GM12878 (cell line): ENCODE measurements at regions of chr9 and their contacts with region 1.

Region 1: DNA sequence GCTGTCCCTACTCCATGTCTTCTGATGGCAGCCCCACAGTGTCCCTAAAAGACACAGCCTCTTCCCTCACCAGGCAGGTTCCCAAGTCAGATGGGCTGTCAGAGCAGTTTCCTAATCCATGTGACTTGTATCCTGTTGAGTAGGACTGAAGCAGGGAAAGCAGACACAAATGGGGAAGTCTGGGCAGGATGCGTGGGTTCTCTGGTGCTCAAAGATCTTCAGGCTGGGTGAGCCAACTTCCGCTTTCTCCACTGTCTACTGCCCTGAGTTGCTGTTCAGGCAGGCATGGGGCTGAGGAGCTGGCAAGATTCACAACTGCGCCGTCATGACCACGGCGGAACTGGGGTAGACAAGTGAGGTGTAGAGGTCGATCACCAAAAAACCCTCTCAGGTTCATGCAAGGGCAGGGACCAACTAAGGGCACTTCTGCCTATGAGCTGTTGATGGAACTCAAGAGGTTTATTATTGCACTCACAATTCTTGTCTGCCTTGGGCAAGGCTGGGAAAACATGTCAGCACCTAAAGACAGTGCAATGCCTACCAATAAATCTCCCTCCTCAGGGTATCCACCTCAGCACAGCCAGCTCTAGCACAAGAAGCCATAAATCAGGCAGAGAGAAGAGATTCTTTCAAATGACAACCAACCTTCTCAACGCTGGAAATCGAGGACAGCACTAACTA is 83.4 kb downstream of the RAPGEF1 start:
- DNase-seq: peak; percentile 87
- ATAC-seq: peak; percentile 94
- H3K4me3 ChIP-seq: peak overlapping the region; percentile 47; the same call in 1 of the 2 replicates
- H3K27ac ChIP-seq: peak overlapping the region; percentile 72
- H3K4me1 ChIP-seq: peaks cover 57% of the 10 kb centered on the region
- H3K27me3 ChIP-seq: no peaks in the 10 kb centered on the region
- CTCF ChIP-seq: no peak
- EP300 ChIP-seq: no peak
- POLR2A ChIP-seq: no peak; the same call in 1 of the 2 replicates
- RAD21 ChIP-seq: no peak

Region 2: DNA sequence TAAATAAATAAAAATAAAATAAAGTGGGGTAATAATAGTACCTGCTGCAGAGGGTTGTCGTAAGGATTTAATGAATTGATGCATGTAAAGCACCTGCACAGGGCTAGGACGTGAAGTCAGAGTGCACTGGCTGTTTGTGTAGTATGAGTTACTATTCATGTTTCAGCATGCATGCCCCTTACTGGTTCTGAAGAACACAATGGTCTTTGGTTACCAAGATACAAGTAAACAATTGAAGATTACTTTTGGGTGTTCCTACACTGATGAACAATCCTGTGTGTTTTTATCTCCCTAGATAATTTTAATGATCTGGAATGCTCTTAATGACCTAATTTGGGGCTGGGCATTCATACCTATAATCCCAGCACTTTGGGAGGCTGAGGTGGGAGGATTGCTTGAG is 285.9 kb before region 1 on chr9:
- CTCF ChIA-PET with region 1: no interaction called
- POLR2A ChIA-PET with region 1: no interaction called
- RAD21 ChIA-PET with region 1: no interaction called
- SMC1A ChIA-PET with region 1: no interaction called
- in situ Hi-C with region 1: no loop called
- intact Hi-C with region 1: no loop called
- DNase-seq: no peak
- ATAC-seq: no peak
- H3K4me3 ChIP-seq: no peak overlapping the region
- H3K27ac ChIP-seq: no peak overlapping the region
- H3K4me1 ChIP-seq: no peaks in the 10 kb centered on the region
- H3K27me3 ChIP-seq: no peaks in the 10 kb centered on the region
- CTCF ChIP-seq: no peak
- EP300 ChIP-seq: no peak
- POLR2A ChIP-seq: no peak
- RAD21 ChIP-seq: no peak

Region 3: DNA sequence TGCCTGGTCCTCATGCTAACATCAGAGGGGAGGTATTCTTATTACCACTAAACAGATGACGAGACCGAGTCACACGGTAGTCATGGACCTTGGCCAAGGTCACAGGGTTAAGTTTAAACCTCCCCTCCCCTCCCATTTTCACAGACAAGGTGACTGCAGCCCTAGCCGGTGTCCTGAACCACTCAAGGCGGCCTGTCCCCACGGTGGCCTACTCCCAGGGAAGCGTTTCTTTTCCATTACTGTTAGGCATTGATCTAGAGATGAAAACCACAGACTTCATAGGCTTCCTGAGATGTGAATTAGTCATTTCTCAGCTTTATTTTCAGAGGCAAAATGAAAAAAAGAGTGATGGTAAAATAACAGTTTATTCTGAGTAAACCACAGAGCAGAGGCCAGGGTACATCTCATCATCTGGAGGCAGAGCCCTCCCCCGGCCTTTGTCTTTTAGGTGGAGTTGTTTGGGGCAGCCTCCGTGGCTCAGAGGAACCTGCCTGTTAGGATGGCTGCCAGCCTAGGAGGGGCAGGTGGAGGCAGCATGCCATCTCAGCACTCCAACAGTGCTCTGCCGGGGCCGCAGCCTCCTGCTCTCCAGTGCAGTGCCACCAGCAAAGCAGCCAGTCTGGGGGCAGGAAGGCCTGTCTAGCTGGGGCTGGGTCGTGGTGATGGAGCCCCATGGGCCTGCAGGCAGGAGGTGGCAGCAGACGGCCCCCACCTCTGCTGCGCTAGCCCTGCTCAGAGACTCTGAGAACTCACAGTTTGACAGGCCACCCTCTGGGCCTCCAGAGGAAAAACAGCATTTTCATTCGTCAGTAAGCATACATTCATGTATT is 12.2 kb after region 1 on chr9:
- CTCF ChIA-PET with region 1: interaction called, 3 read pairs
- POLR2A ChIA-PET with region 1: interaction called, 6 read pairs
- RAD21 ChIA-PET with region 1: interaction called, 32 read pairs
- SMC1A ChIA-PET with region 1: interaction called, 128 read pairs
- in situ Hi-C with region 1: no loop called
- intact Hi-C with region 1: no loop called
- DNase-seq: peak; percentile 62
- ATAC-seq: peak; percentile 74
- H3K4me3 ChIP-seq: peak overlapping the region; percentile 54
- H3K27ac ChIP-seq: peak overlapping the region; percentile 88
- H3K4me1 ChIP-seq: peaks cover 72% of the 10 kb centered on the region
- H3K27me3 ChIP-seq: no peaks in the 10 kb centered on the region
- CTCF ChIP-seq: peak; percentile 3 to 5 (median 4); a peak in 1 of 6 replicates
- EP300 ChIP-seq: peak; percentile 25 to 47; a peak in 2 of 4 replicates
- POLR2A ChIP-seq: peak; percentile 11; the same call in 1 of the 2 replicates
- RAD21 ChIP-seq: no peak; the same call in 1 of the 2 replicates

Region 4: DNA sequence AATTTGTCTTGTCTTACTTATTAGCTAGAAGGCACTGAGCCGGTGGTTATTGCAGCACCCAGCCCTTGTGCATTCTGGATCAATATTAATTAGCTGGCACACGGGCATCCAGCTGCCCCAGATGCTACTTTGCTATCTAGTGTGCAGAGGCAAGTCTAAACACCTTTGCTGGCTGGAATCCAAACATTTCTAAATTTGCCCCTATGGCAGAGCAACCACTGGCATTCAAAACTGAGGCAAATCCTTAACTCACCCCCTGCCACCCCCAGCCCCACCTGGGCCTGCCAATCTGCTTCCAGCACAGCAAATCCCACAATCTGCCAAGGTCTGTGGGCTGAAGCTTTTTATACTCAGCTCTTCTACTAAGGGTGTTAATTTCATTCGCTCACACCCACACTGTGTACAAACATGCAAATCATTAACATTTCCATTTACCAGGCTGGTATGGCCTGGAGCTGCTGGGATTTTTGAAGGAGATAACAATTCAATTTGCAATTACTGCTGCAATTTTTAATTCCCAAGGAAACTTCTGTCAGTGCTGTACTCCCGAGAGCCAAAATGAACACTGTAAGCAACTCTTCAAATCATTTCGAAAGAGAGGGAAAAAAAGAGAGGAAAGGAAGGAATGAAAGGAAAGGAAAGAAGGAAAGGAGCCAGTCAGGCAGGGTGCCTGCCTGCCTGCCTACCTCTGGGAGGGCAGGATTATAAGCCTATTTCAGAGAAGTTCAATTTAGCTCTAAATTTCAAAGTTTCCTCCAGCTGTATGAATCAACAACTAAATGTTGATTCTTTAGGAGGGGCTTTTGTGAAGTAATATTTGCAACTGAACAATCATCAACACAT is 47.9 kb after region 1 on chr9:
- CTCF ChIA-PET with region 1: interaction called, 3 read pairs
- POLR2A ChIA-PET with region 1: interaction called, 3 read pairs
- RAD21 ChIA-PET with region 1: interaction called, 12 read pairs
- SMC1A ChIA-PET with region 1: interaction called, 11 read pairs
- in situ Hi-C with region 1: no loop called
- intact Hi-C with region 1: no loop called
- DNase-seq: no peak
- ATAC-seq: peak; percentile 12; the same call in 1 of the 3 replicates
- H3K4me3 ChIP-seq: no peak overlapping the region
- H3K27ac ChIP-seq: peak overlapping the region; percentile 83
- H3K4me1 ChIP-seq: peaks cover 63% of the 10 kb centered on the region
- H3K27me3 ChIP-seq: no peaks in the 10 kb centered on the region
- CTCF ChIP-seq: no peak
- EP300 ChIP-seq: no peak
- POLR2A ChIP-seq: no peak
- RAD21 ChIP-seq: no peak